ENCODE measurements at regions of chr2 and their contacts with region 1.

Region 1: DNA sequence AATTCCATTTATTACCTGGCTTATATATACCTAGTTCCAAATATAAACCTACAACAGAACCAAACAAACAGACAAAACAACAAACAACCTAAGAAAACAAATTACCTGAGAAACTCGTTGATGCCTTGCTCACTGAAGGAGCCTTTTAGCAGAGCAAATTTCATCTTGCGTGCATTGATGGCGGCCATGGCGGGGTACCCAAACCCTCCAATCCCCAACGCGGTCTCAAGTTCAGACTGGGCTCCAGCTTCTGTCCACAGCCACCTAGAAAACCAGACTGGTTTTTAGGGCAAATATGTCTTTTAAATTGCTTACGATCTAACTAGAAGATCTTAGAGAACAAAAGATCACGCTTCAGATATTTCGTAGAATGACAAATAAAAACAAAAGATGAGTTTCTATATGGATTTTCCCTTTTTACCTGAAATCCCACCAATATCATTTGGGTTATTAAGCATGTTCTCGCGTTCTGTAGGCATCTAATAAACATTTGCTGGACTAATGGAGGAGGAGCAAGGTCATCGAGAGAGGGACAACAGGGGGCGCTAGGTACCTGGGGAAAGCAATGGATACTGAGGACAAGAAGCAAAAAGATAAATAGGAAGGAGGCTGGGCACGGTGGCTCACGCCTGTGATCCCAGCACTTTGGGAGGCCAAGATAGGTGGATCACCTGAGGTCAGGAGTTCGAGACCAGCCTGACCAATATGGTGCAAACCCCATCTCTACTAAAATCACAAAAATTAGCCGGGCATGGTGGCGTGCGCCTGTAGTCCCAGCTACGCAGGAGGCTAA is 25.2 kb downstream of the PDIA6 start:
- DNase-seq: peak; percentile 48
- CTCF ChIP-seq: peak; percentile 50

Region 2: DNA sequence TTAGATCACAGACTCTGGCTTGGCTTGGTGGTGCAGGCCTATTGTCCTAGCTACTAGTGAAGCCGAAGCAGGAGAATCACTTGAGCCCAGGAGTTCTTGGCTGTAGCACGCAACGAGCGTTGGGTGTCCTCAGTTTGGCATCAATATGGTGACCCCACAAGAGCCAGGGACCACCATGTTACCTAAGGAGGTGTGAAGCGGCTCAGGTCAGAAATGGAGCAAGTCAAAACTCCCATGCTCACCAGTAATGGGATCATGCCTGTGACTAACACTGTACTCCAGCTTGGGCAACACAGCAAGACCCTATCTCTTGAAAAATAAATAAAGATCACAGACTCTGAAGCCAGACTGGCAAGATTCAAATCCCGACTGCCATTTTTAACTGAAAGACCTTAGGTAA is 95.9 kb before region 1 on chr2:
- in situ Hi-C with region 1: loop called (anchors 10 kb)
- DNase-seq: no peak
- CTCF ChIP-seq: no peak